Ascending aorta (tissue), 2 donors: ENCODE measurements at regions of chrX and their contacts with region 1.

Region 1: GRCh38 chrX:118603981-118604380 is 108.4 kb downstream of the DOCK11 start:
- DNase-seq: peak in 1 of 2 donors; percentile 74
- H3K4me3 ChIP-seq: no peak overlapping the region
- H3K27ac ChIP-seq: peak overlapping the region; percentile 49 to 58
- H3K4me1 ChIP-seq: peaks cover 0 to 11% of the 10 kb centered on the region in 2 donors
- H3K27me3 ChIP-seq: no peaks in the 10 kb centered on the region
- CTCF ChIP-seq: peak; percentile 57 to 82 (median 74)

Region 2: GRCh38 chrX:118459494-118459893 is 144.5 kb before region 1 on chrX:
- intact Hi-C with region 1: loop called (anchors 2 kb)
- DNase-seq: no peak
- H3K4me3 ChIP-seq: no peak overlapping the region
- H3K27ac ChIP-seq: no peak overlapping the region
- H3K4me1 ChIP-seq: no peaks in the 10 kb centered on the region
- H3K27me3 ChIP-seq: no peaks in the 10 kb centered on the region
- CTCF ChIP-seq: peak; percentile 36 to 57 (median 51)

Region 3: DNA sequence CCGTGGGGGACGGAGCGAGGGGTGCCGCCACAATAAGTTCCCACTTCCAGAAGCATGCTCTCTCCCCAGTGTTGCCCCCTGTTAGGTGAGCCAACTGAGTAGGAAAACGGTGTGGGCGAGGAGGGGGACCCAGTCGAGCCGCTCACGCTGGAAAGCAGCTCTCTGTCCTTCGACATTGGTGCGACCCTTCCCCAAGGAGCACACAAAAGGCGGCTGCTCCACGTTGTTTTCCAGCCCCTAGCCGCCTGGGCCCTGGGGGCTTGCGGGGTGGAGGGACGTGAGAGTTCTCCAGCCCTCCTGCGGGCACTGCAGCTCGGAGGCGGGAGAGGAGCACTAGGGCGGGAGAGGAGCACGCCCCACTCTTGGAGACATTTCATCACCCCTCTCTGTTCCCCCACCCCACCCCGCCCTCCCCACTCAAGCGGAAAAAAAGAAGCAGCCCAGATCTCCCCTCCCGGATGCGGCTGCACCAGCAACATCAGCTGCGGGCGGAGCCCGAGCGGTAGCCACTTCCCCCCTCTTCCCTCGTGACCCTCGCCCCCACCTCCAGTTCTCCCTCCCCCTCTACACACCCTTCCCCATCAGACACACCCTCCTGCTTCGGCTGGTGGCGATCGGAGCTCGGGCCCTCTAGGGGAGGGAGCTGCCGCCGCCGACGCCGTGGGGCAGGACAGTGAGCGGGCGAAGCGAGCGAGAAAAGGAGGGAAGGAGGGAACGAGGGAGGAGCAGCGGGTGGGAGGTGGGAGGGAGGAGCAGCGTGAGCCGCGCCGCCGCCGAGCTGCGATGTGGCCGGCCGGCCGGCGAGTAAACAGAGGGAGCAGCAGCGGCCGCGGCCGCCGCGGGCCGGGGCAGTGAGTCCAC is 108.7 kb before region 1 on chrX and contains the start of gene DOCK11:
- intact Hi-C with region 1: loop called (anchors 2 kb)
- DNase-seq: peak; percentile 50 to 85
- H3K4me3 ChIP-seq: peak within 1 kb of the TSS; percentile 49 to 93
- H3K27ac ChIP-seq: peak within 1 kb of the TSS; percentile 80 to 94
- H3K4me1 ChIP-seq: peaks cover 0 to 3% of the 10 kb centered on the region in 2 donors
- H3K27me3 ChIP-seq: no peaks in the 10 kb centered on the region
- CTCF ChIP-seq: no peak
- total RNA-seq, gene DOCK11: 23.0 TPM

Region 4: DNA sequence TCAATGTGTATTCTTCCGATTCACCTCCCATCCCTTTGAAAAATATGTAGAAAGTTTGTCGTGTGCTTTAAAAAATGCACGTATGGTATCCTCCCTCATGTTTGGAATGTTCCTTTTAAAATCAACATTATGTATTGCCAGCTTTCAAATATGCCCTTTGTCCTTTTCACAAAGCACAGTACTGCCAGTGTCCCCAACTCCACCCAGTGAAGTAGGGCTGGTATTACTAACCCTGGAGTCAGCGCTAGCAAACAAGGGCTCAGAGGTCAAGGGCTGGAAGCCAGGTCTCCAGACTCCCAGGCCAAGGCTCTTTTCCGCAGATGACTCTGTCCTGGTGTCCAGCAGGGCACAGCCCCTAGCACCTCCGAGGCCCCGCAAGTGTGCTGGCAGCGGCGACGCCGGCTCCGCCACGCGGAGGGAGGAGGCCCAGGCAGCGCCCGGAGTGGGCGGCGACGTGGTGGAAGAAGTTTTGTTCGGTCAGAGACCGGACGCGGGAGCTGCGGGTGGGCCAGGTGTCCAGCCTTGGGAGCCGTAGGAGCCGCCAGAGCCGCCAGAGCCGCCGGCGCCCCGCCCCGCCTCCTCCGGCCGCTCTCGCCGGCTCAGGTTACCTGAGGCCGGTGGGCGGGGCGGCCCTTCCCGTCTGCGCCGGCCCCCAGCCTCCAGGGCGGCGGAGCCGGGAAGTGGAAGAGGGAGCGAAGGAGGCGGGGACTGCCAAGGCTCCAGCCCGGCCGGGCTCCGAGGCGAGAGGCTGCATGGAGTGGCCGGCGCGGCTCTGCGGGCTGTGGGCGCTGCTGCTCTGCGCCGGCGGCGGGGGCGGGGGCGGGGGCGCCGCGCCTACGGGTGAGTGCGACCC is 123.1 kb after region 1 on chrX and contains the start of gene IL13RA1:
- intact Hi-C with region 1: loop called (anchors 5 kb)
- DNase-seq: peak; percentile 40 to 90
- H3K4me3 ChIP-seq: peak within 1 kb of the TSS; percentile 65 to 76
- H3K27ac ChIP-seq: peak within 1 kb of the TSS; percentile 91 to 92
- H3K4me1 ChIP-seq: peaks cover 0 to 3% of the 10 kb centered on the region in 2 donors
- H3K27me3 ChIP-seq: no peaks in the 10 kb centered on the region
- CTCF ChIP-seq: no peak
- total RNA-seq, gene IL13RA1: 29.6 TPM

Region 5: DNA sequence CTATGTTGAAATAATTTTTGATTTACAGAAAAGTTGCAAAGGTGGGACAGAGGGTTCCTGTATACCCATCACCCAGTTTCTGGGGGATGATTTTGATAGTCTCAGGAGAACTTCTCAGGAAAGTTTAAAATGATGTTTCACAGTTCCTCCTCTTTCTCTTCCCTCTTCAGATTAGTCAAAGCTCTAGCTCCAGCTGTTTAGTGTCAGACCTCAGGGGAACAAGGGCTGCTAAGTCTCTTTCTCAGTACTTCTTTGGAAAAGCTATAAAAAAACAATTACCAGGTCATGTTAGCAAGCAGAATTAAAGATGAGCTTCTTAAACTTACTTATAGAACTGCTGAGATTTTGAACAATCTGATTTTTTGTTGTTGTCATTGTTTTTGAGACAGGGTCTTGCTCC is 135.6 kb after region 1 on chrX:
- intact Hi-C with region 1: no loop called
- DNase-seq: no peak
- H3K4me3 ChIP-seq: no peak overlapping the region
- H3K27ac ChIP-seq: no peak overlapping the region
- H3K4me1 ChIP-seq: no peaks in the 10 kb centered on the region
- H3K27me3 ChIP-seq: no peaks in the 10 kb centered on the region
- CTCF ChIP-seq: no peak

Region 6: DNA sequence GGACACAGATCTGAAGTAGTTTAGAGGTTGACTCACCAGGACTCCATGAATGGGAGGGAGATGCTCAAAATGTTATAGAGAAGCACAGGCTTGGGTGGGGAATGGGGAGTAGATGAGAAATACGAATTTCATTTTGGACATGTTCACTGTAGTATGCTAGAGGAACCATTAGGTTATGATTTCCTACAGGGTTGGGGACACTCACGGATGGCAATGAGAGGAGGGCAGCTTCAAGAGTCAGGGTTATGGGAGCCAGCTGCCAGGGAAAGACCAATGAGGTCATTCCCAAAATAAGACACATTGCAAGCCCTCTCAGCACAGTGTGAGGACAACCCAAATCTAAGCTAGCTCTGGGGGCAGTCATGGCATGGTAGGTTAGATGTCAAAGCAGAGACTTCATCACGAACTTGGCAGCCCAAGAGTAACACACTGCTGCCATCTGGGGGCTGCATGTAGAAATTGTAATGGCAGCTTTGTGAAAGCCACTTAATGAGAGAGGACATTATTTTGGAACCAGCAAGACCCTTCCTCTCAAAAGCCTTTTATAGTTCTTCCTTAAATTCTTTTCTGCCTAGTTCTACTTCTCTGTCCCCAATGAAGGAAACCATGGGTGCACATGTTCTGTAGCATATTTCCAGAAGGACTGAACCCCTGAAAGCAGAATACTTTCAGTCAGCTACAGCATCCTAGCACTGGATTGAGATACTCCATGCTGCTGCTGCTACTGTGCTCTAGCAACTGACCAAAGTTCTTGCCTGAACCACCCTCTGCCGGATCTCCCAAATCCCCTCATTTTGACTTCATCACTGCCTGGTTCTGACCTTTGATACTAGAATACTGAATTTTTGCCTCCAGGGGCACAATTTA is 203.4 kb after region 1 on chrX:
- intact Hi-C with region 1: loop called (anchors 2 kb)
- DNase-seq: no peak
- H3K4me3 ChIP-seq: no peak overlapping the region
- H3K27ac ChIP-seq: no peak overlapping the region
- H3K4me1 ChIP-seq: no peaks in the 10 kb centered on the region
- H3K27me3 ChIP-seq: no peaks in the 10 kb centered on the region
- CTCF ChIP-seq: peak; percentile 52 to 68 (median 67)

Region 7: DNA sequence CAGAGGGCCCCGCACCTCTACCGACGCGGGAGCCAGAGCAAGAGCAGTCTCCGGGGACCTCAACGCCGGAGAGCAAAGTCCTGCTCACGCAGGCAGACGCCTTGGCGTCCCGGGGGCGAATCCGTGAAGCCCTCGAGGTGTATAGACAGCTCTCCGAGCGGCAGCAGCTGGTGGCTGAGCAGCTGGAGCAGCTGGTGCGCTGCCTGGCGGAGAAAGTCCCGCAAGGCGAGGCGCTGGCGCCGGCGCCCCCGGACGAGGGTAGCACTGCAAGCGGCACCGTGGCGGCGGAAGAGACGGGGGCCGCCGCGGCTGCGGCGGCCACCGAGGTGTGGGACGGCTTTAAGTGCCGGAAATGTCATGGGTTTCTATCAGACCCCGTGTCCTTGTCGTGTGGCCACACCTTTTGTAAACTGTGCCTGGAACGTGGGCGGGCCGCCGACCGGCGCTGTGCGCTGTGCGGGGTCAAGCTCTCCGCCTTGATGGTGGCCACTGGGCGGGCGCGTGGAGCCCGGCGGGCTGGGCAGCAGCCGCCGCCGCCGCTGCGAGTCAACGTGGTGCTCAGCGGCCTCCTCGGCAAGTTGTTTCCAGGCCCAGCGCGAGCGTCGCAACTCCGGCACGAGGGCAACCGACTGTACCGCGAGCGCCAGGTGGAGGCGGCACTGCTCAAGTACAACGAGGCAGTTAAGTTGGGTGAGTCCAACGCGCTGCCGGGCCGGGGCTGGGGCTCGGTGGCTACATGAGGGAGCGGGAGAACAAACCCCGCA is 371.1 kb after region 1 on chrX:
- intact Hi-C with region 1: loop called (anchors 5 kb)
- DNase-seq: peak in 1 of 2 donors; percentile 66
- H3K4me3 ChIP-seq: peak overlapping the region; percentile 77 to 83
- H3K27ac ChIP-seq: peak overlapping the region; percentile 76 to 87
- H3K4me1 ChIP-seq: no peaks in the 10 kb centered on the region
- H3K27me3 ChIP-seq: no peaks in the 10 kb centered on the region
- CTCF ChIP-seq: no peak